ENCODE measurements at regions of chr3 and their contacts with region 1.

Region 1: DNA sequence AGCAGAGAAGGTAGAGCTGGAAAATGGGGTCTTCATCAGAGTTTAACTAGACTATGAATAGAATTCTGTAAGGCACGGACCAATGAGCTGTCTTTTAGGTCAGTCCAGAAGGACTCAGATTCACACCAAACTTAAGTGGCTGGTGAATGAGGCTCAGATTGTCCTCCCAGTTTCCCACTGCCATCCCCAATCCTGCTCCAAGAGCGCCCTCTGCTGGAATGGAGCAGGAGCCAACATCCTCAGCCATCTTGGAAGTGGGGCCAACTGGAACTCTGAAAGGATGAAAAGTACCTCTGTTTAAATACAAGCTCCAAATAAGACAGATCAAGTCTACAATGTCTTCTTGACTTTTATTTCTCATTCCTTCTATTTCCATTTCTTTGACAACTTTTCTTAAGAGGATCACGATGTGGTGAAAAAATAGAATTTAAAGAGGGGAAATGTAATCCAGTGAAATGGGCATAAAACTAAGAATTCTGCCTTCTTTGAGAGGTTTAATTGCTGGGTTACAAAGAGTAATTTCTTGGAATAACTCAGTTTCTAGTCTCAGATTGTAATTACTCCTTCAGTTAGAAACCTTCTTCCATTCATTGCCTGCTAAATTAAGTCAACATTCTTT is 217.1 kb upstream of the TPRG1 start:
- DNase-seq: peak; percentile 75 to 98 (median 91)

Region 2: DNA sequence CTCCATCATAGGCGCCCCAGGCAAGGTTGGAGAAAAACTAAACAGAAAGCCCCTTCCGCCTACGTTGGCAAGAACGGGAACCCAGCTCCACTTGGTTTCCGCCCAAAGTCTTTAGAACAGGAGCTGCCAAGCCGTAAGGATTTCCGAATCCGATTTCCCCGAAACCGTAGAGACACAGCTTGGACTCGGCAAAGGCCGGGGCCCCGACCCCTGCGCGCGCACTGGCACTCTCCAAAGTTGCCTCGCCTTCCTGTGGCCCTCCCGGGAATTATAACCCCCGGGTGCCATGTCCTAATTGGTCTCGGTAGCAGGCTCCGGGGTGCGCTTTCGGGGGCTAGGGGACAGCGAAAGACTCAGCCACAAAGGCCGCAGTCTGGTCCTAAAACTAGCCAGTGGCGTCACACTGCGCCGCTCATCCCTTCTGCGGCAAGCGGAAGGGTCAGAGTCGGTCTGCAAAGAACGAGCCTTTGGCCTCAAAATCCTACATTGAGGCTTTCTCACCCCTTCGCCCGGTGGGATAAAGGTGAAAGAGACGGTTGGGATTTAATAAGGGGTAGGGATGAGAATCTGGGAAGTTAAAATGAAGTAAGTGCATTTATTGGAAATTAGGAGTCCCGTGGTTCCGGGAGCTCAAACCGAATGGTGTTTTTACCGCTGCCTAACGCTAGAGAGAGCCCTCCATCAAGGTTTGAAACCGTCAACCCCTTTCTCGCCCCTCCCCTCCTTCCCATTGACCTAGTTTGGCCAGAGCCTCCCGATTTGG is 1216.2 kb before region 1 on chr3:
- intact Hi-C with region 1: loop called (anchors 1 kb)
- DNase-seq: peak; percentile 73 to 96 (median 80)

Region 3: DNA sequence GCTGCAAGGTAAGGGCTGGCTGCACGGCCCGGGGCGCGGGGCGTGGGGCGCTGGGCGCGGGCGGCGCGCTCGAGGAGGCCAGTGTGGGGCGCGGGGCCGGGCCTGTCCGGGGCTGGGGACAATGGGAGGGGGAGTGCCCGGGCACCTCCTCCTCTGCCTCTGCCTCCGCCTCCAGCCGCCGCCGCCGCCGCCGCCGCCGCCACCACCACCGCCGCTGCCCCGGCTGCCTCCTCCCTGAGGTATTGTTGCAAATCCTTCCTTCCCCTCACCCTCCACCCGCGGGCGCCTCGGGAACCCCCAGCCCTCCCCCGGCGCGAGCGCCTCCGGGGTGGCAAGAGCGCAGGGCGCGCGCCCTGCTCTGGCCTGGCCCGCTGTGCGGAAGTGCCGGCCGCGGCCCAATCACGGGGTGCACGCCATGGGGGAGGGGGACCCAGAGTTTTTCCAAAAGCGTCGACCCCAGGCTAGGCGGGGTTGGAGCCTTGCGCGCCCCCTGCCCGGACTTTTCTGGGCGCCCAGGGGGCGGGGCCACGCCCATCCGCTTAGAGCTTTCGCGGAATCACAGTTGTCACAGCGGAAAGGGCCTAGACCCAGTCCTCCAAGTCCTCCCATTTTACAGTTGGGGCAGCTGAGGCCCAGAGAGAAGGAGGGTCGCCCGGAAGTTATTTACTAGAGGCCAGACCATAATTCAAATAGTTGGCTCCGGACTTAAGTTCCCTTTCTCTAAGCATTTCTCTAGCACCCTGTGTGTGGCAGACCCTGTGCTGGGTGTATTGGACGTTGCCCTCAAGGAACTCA is 800.5 kb before region 1 on chr3 and contains the start of gene LPP:
- intact Hi-C with region 1: loop called (anchors 10 kb)
- DNase-seq: peak; percentile 44 to 93 (median 60)

Region 4: GRCh38 chr3:188854772-188855149 is 99.9 kb before region 1 on chr3:
- intact Hi-C with region 1: loop called (anchors 5 kb)
- DNase-seq: no peak

Region 5: GRCh38 chr3:189148081-189148507 is 193.4 kb after region 1 on chr3:
- intact Hi-C with region 1: loop called (anchors 5 kb)
- DNase-seq: peak in 7 of 10 donors; percentile 20 to 90 (median 70)

Region 6: GRCh38 chr3:189324538-189325138 is 369.9 kb after region 1 on chr3:
- intact Hi-C with region 1: no loop called
- DNase-seq: no peak

Measured in posterior cingulate gyrus (tissue), 11 donors.